ENCODE measurements at regions of chr1 and their contacts with region 1.

Region 1: GRCh38 chr1:232853994-232854797 is 49.0 kb downstream of the MAP10 start:
- DNase-seq: no peak
- ATAC-seq: no peak
- H3K4me3 ChIP-seq: no peak overlapping the region
- H3K27ac ChIP-seq: no peak overlapping the region
- H3K4me1 ChIP-seq: no peaks in the 10 kb centered on the region
- H3K27me3 ChIP-seq: peaks cover 0 to 2% of the 10 kb centered on the region in 2 experiments; a peak in 1 of 4 replicates
- CTCF ChIP-seq: no peak
- EP300 ChIP-seq: no peak
- POLR2A ChIP-seq: no peak
- RAD21 ChIP-seq: no peak

Region 2: GRCh38 chr1:232493869-232494268 is 360.3 kb before region 1 on chr1:
- CTCF ChIA-PET with region 1: no interaction called
- POLR2A ChIA-PET with region 1: no interaction called
- RAD21 ChIA-PET with region 1: no interaction called
- SMC1A ChIA-PET with region 1: no interaction called
- in situ Hi-C with region 1: no loop called
- intact Hi-C with region 1: loop called (anchors 10 kb)
- DNase-seq: no peak
- ATAC-seq: no peak
- H3K4me3 ChIP-seq: no peak overlapping the region
- H3K27ac ChIP-seq: no peak overlapping the region
- H3K4me1 ChIP-seq: no peaks in the 10 kb centered on the region
- H3K27me3 ChIP-seq: no peaks in the 10 kb centered on the region
- CTCF ChIP-seq: no peak
- EP300 ChIP-seq: no peak
- POLR2A ChIP-seq: no peak
- RAD21 ChIP-seq: no peak

Region 3: DNA sequence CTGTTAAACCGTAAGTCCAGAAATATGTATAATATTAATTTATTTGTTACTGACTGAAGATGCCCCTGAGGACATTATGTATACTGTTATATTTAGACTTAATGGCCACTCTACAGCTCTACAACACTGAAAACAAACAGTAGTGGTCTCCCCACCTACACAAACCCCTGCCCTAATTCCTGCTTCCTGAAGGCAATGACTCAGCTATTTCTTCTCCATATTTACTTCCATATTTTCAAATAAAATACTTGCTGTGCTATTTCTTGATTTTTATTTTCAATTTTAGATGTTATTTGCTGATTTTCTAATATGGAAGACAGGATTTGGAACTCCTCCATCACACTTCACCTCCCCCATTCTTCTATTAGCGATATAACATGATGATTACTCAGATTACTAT is 343.7 kb after region 1 on chr1:
- CTCF ChIA-PET with region 1: no interaction called
- POLR2A ChIA-PET with region 1: no interaction called
- RAD21 ChIA-PET with region 1: no interaction called
- SMC1A ChIA-PET with region 1: no interaction called
- in situ Hi-C with region 1: no loop called
- intact Hi-C with region 1: no loop called
- DNase-seq: no peak
- ATAC-seq: no peak
- H3K4me3 ChIP-seq: no peak overlapping the region
- H3K27ac ChIP-seq: no peak overlapping the region
- H3K4me1 ChIP-seq: no peaks in the 10 kb centered on the region
- H3K27me3 ChIP-seq: no peaks in the 10 kb centered on the region
- CTCF ChIP-seq: no peak
- EP300 ChIP-seq: no peak
- POLR2A ChIP-seq: no peak
- RAD21 ChIP-seq: no peak

Region 4: GRCh38 chr1:233598891-233599541 is 744.8 kb after region 1 on chr1:
- CTCF ChIA-PET with region 1: no interaction called
- POLR2A ChIA-PET with region 1: no interaction called
- RAD21 ChIA-PET with region 1: no interaction called
- SMC1A ChIA-PET with region 1: no interaction called
- in situ Hi-C with region 1: no loop called
- intact Hi-C with region 1: no loop called
- DNase-seq: peak; percentile 76
- ATAC-seq: peak; percentile 82
- H3K4me3 ChIP-seq: peak overlapping the region; percentile 33; the same call in 1 of the 2 replicates
- H3K27ac ChIP-seq: peak overlapping the region; percentile 96
- H3K4me1 ChIP-seq: peaks cover 30% of the 10 kb centered on the region
- H3K27me3 ChIP-seq: no peaks in the 10 kb centered on the region
- CTCF ChIP-seq: no peak
- EP300 ChIP-seq: peak; percentile 94 to 98
- POLR2A ChIP-seq: no peak
- RAD21 ChIP-seq: no peak

Measured in GM12878 (cell line).